ENCODE measurements at regions of chr4 and their contacts with region 1.

Region 1: GRCh38 chr4:113761620-113762185 is at the start of gene CAMK2D:
- DNase-seq: peak; percentile 82
- H3K4me3 ChIP-seq: peak within 1 kb of the TSS; percentile 87
- H3K27ac ChIP-seq: peak within 1 kb of the TSS; percentile 96
- H3K4me1 ChIP-seq: peaks cover 29% of the 10 kb centered on the region
- H3K27me3 ChIP-seq: no peaks in the 10 kb centered on the region
- total RNA-seq, gene CAMK2D: 94.5 and 104 TPM in 2 replicates

Region 2: DNA sequence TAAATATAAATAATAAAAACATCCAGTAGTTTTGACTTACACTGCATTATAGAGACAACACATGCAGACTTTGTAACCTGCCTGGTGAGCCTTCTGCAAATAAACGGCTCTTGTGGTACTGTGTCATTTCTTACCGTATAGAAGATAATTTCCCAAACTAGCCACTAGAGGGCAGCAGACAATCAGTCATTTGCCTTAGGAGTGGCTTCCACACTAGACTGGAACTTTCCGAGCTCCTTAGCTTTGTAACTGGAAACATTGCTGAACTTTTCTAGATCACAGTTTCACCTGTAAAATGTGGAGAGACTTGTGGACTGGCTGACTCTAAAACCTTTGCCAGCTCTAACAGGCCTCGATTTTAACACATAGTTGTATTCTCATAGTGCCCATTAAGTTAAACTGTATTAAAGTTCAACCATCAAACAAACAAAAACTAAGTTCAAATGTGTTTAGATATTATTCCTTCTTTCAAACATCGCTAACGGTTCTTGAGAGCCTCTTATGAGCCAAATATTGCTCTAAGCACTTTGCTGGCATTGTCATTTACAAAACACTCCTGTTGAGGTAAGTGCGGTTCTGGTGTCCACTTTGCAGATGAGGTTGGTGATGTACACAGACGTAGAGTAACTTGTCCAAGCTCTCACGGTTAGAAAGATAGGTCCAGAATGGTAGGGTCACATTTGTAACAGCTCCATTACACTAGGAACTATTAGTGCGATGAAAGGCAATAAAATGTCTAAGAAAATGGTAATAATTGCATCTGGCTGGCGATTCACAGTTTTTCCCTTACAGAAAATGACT is 366.8 kb before region 1 on chr4:
- in situ Hi-C with region 1: loop called (anchors 25 kb)
- DNase-seq: peak; percentile 87
- H3K4me3 ChIP-seq: no peak overlapping the region
- H3K27ac ChIP-seq: no peak overlapping the region
- H3K4me1 ChIP-seq: peaks cover 15% of the 10 kb centered on the region
- H3K27me3 ChIP-seq: no peaks in the 10 kb centered on the region

Region 3: GRCh38 chr4:114378306-114378903 is 616.7 kb after region 1 on chr4:
- in situ Hi-C with region 1: loop called (anchors 10 kb)
- DNase-seq: peak; percentile 78
- H3K4me3 ChIP-seq: no peak overlapping the region
- H3K27ac ChIP-seq: no peak overlapping the region
- H3K4me1 ChIP-seq: peaks cover 15% of the 10 kb centered on the region
- H3K27me3 ChIP-seq: no peaks in the 10 kb centered on the region